GM10248 (cell line): ENCODE measurements at regions of chr2 and their contacts with region 1.

Region 1: DNA sequence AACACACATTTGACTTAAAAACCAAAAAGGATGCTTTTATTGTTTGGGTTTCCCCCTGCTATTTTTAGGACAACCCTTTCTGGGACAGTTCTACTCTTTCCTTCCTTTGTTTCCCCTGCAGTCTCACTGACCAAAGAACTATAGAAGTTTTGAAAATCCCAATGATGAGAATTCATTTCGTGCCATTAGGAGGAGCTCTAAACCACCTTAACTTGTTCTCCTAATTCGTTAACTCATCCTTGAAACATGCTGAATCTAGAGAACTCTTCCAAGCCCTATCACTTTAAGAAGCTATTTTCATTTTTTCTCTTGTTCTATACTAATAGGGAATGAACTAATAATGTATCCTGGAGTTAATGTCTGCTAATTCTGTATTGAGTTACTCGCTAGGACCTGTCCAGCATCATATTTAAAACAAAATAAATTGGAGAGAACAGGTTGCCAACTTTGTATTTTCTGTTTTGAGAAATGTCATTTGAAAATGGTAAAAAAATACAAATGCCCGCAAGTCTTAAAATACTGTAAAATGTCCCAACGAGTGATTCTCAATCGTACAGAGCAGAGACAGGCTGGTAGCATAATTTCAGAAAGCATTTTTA is 62.9 kb downstream of the AFTPH start:
- DNase-seq: peak; percentile 37
- CTCF ChIP-seq: peak; percentile 55

Region 2: GRCh38 chr2:64574871-64575270 is 12.1 kb before region 1 on chr2:
- CTCF ChIA-PET with region 1: interaction called, 18 read pairs
- POLR2A ChIA-PET with region 1: no interaction called
- DNase-seq: no peak
- CTCF ChIP-seq: no peak

Region 3: GRCh38 chr2:64609227-64609941 is 22.4 kb after region 1 on chr2:
- CTCF ChIA-PET with region 1: interaction called, 81 read pairs
- POLR2A ChIA-PET with region 1: interaction called, 4 read pairs
- DNase-seq: peak; percentile 91
- CTCF ChIP-seq: peak; percentile 82

Region 4: GRCh38 chr2:64864674-64865072 is 277.7 kb after region 1 on chr2:
- CTCF ChIA-PET with region 1: interaction called, 14 read pairs
- POLR2A ChIA-PET with region 1: no interaction called
- DNase-seq: peak; percentile 51
- CTCF ChIP-seq: no peak